MCF 10A (cell line): ENCODE measurements at regions of chr10 and their contacts with region 1.

Region 1: DNA sequence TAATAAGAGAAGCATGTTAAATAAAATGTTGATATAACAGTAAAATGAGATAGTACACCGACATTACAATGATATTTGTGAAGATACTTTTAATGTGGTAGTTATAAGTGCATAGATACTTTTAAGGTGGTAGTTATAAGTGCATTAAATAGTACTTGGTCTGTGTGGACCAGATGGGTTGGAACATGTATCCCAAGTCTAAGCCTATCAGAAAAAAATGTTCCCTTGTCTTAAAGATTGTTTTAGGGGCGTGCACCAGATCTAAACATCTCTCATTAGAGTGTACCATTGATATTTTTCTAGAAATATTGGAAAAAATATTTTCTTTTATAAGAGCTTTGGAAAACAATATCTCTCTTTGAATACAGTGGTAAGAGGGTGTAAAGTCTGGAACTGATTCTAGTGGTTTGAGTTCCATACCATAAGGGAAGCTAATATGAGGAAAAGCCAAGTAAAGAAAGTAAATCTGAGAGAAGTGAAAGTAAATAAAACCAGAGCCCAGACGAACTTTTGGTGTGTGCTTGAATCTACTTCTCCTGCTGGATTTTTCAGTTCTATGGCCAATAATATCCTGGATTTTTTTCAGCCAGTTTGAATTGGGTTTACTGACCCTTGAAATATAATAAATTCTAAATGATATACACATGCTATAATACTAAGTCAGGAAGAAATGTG is 175.3 kb downstream of the MBL2 start:
- DNase-seq: peak; percentile 9
- H3K4me3 Mint-ChIP-seq: no peak overlapping the region
- H3K27ac Mint-ChIP-seq: no peak overlapping the region
- H3K4me1 Mint-ChIP-seq: no peaks in the 10 kb centered on the region
- H3K27me3 Mint-ChIP-seq: no peaks in the 10 kb centered on the region
- CTCF ChIP-seq: no peak

Region 2: DNA sequence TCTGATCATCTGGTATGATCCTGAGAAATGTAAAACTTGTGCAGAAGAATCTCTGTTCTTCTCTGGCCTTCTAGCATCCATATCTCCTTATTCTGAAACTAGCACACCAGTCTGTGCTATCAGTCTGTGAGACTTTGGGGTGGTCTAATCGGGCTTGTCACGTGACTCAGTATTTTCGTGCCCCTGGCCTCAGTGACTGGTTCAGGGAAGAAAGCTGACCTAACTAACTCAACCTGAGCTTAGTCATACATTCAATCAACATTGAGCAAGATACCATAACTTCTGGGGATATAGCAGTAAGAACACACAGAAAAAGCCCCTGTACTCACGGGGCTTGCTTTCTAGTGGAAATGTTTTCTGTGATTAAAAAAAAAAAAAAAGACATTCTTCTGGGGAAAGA is 174.0 kb before region 1 on chr10:
- CTCF ChIA-PET with region 1: no interaction called
- POLR2A ChIA-PET with region 1: no interaction called
- intact Hi-C with region 1: no loop called
- DNase-seq: peak; percentile 32
- H3K4me3 Mint-ChIP-seq: no peak overlapping the region
- H3K27ac Mint-ChIP-seq: no peak overlapping the region
- H3K4me1 Mint-ChIP-seq: peaks cover 5% of the 10 kb centered on the region
- H3K27me3 Mint-ChIP-seq: no peaks in the 10 kb centered on the region
- CTCF ChIP-seq: no peak

Region 3: GRCh38 chr10:52586710-52587109 is 10.6 kb before region 1 on chr10:
- CTCF ChIA-PET with region 1: interaction called, 13 read pairs
- POLR2A ChIA-PET with region 1: interaction called, 3 read pairs
- intact Hi-C with region 1: no loop called
- DNase-seq: no peak
- H3K4me3 Mint-ChIP-seq: no peak overlapping the region
- H3K27ac Mint-ChIP-seq: no peak overlapping the region
- H3K4me1 Mint-ChIP-seq: no peaks in the 10 kb centered on the region
- H3K27me3 Mint-ChIP-seq: no peaks in the 10 kb centered on the region
- CTCF ChIP-seq: no peak

Region 4: GRCh38 chr10:52755297-52756062 is 158.2 kb after region 1 on chr10:
- CTCF ChIA-PET with region 1: no interaction called
- POLR2A ChIA-PET with region 1: no interaction called
- intact Hi-C with region 1: no loop called
- DNase-seq: peak; percentile 65
- H3K4me3 Mint-ChIP-seq: no peak overlapping the region
- H3K27ac Mint-ChIP-seq: no peak overlapping the region
- H3K4me1 Mint-ChIP-seq: peaks cover 7% of the 10 kb centered on the region
- H3K27me3 Mint-ChIP-seq: no peaks in the 10 kb centered on the region
- CTCF ChIP-seq: no peak